Right ventricle myocardium superior (tissue), 1 donor: ENCODE measurements at regions of chr2 and their contacts with region 1.

Region 1: GRCh38 chr2:68441179-68441993 is 25.7 kb downstream of the FBXO48 start:
- DNase-seq: peak; percentile 80
- ATAC-seq: peak; percentile 94

Region 2: DNA sequence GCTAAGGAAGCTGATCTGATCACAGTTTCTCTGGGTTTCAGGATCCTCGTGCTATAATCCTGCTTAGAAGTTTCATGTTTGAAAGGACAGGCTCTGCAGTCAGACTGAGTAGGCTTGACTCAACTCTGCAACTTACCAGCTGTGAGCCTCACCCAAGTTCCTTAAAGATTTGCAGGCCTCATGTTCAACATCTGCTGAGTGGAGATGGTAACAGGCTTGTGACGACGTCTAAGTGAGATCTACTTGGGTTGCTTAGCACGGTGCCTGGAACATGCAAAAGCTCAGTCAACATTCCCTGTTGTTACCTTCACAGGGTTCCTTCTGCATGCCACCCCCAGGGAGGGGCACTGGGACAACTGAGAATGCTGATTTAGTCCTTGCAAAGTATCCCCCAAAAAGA is 542.8 kb before region 1 on chr2:
- intact Hi-C with region 1: no loop called
- DNase-seq: no peak
- ATAC-seq: no peak

Region 3: GRCh38 chr2:68121873-68122679 is 319.3 kb before region 1 on chr2:
- intact Hi-C with region 1: loop called (anchors 5 kb)
- DNase-seq: peak; percentile 92
- ATAC-seq: peak; percentile 89

Region 4: DNA sequence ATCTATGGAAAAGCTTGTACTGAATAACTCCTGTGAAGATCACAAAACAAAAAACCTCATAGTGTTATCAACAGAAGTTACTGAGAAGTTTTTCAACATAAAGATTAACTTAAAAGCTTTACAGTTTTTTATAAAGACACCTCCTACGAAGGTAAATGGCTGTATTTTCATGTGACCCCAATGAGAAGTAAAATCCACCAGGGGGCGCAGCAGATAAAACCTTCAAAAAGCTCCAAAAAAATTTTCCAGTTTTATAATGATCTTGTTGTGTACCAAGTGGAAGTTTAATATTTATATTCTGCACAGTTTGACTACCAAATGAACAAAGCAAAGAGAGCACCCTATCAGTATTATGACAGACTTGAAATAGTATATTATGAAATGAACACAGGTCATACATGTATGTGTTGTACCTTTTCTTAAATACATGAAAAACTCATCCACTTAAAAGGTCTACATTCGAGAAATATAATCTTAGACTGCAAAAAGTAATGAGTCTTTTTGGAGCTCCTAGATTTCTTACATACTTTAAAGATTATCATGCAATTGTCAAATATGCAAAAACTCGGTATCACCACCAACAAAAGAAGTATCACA is 245.2 kb before region 1 on chr2:
- intact Hi-C with region 1: loop called (anchors 5 kb)
- DNase-seq: no peak
- ATAC-seq: peak; percentile 56

Region 5: GRCh38 chr2:68362069-68362468 is 79.3 kb before region 1 on chr2:
- intact Hi-C with region 1: loop called (anchors 5 kb)
- DNase-seq: peak; percentile 87
- ATAC-seq: peak; percentile 86